Endothelial cell of umbilical vein (primary cell): ENCODE measurements at regions of chr4 and their contacts with region 1.

Region 1: GRCh38 chr4:25234390-25235370 is 847 bp downstream of the PI4K2B start:
- DNase-seq: peak; percentile 92
- H3K4me3 ChIP-seq: peak overlapping the region; percentile 49 to 77 (median 57)
- H3K27ac ChIP-seq: peak overlapping the region; percentile 62
- H3K4me1 ChIP-seq: peaks cover 8% of the 10 kb centered on the region
- H3K27me3 ChIP-seq: no peaks in the 10 kb centered on the region
- CTCF ChIP-seq: peak; percentile 20 to 37
- POLR2A ChIP-seq: no peak

Region 2: GRCh38 chr4:25159884-25160713 is 74.6 kb before region 1 on chr4 and contains the start of gene SEPSECS:
- CTCF ChIA-PET with region 1: interaction called, 11 read pairs
- POLR2A ChIA-PET with region 1: no interaction called
- dilution Hi-C with region 1: no loop called
- intact Hi-C with region 1: loop called (anchors 1 kb)
- DNase-seq: peak; percentile 99
- H3K4me3 ChIP-seq: peak within 1 kb of the TSS; percentile 39 to 94 (median 84)
- H3K27ac ChIP-seq: peak within 1 kb of the TSS; percentile 81
- H3K4me1 ChIP-seq: peaks cover 7% of the 10 kb centered on the region
- H3K27me3 ChIP-seq: no peaks in the 10 kb centered on the region
- CTCF ChIP-seq: no peak
- POLR2A ChIP-seq: peak; percentile 87
- total RNA-seq, gene SEPSECS: 5.8 and 8.3 TPM in 2 replicates

Region 3: GRCh38 chr4:25172961-25173915 is 61.4 kb before region 1 on chr4:
- CTCF ChIA-PET with region 1: interaction called, 4 read pairs
- POLR2A ChIA-PET with region 1: no interaction called
- dilution Hi-C with region 1: no loop called
- intact Hi-C with region 1: loop called (anchors 2 kb)
- DNase-seq: peak; percentile 91
- H3K4me3 ChIP-seq: no peak overlapping the region
- H3K27ac ChIP-seq: peak overlapping the region; percentile 41
- H3K4me1 ChIP-seq: peaks cover 16% of the 10 kb centered on the region
- H3K27me3 ChIP-seq: no peaks in the 10 kb centered on the region
- CTCF ChIP-seq: no peak
- POLR2A ChIP-seq: no peak

Region 4: GRCh38 chr4:25376754-25377571 is 142.3 kb after region 1 on chr4 and contains the start of gene ANAPC4:
- CTCF ChIA-PET with region 1: interaction called, 3 read pairs
- POLR2A ChIA-PET with region 1: no interaction called
- dilution Hi-C with region 1: no loop called
- intact Hi-C with region 1: loop called (anchors 1 kb)
- DNase-seq: peak; percentile 82
- H3K4me3 ChIP-seq: peak within 1 kb of the TSS; percentile 71 to 96 (median 87)
- H3K27ac ChIP-seq: peak within 1 kb of the TSS; percentile 40
- H3K4me1 ChIP-seq: peaks cover 11% of the 10 kb centered on the region
- H3K27me3 ChIP-seq: no peaks in the 10 kb centered on the region
- CTCF ChIP-seq: no peak
- POLR2A ChIP-seq: peak; percentile 75
- total RNA-seq, gene ANAPC4: 23.5 and 32.1 TPM in 2 replicates